Natural killer cell (primary cell): ENCODE measurements at regions of chr2 and their contacts with region 1.

Region 1: DNA sequence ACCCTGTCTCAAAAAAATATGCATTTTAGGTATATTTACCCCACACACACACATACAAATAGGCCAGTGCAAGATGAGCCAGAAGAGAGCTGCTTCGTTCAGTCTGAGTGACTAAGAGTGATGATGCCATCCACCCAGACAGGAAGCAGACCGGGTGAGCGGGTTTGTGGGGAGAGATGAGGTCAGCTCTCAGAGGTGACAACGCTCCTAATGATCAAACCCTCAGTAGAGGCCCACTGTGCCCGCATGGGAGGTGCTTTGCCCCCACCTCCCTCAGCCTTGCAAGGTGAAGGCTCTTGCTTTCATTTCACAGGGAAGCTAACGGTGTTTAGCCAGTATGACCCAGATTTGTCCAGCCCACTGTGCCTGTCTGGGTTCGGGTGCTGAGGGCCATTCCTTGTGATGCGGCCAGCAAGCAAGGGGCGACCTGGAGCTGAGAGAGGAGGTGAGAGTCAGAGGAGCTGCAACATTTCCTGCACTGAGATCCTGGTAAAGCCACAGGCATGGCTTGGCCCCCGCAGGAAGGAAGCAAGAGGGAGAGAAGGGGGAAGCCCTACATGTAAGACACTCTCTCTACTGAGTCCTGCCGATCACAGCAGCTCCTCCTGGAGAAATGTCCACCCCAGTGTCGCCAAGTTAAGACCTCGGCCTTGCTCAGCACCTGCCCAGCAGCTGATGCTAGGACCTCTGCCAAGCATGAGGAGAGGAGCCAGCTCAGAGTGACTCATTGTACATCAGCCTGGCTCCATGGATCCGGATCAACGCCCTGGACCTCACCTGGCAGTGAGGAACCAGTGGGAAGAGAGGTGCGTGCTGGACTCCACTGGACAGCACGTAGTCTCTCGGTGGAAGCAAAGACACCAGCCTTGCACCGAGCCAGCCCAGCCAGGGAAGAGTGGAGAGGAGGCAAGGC is 37.0 kb downstream of the NIFK start:
- DNase-seq: peak; percentile 86 to 92
- ATAC-seq: peak; percentile 86 to 95 (median 91)
- H3K4me3 ChIP-seq: peak overlapping the region; percentile 25
- H3K4me3 Mint-ChIP-seq: peak overlapping the region; percentile 95
- H3K27ac ChIP-seq: peak overlapping the region; percentile 88
- H3K27ac Mint-ChIP-seq: peak overlapping the region; percentile 97
- H3K4me1 ChIP-seq: peaks cover 29% of the 10 kb centered on the region
- H3K4me1 Mint-ChIP-seq: peaks cover 37 to 39% of the 10 kb centered on the region in 2 donors
- H3K27me3 ChIP-seq: no peaks in the 10 kb centered on the region
- H3K27me3 Mint-ChIP-seq: no peaks in the 10 kb centered on the region
- CTCF ChIP-seq: no peak

Region 2: DNA sequence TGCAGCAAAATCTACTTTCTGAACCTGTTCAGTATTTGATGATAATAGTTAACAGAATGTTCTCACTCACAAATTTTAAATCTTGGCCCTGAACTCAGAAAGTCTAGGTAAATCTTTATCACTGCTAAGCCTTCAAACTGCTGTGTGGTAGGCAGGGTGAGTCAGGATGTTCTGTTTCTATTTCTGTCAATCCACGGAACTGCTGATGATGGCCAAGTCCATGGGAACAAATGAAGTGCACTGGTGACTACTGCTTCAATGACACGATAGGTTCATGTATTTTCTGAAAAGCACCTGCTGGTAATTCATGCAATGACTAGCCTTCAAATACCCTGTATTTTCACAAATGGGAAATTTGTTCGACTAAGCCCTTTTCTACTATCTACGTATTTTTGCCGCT is 22.8 kb after region 1 on chr2:
- intact Hi-C with region 1: loop called (anchors 2 kb)
- DNase-seq: no peak
- ATAC-seq: no peak
- H3K4me3 ChIP-seq: no peak overlapping the region
- H3K4me3 Mint-ChIP-seq: no peak overlapping the region
- H3K27ac ChIP-seq: no peak overlapping the region
- H3K27ac Mint-ChIP-seq: no peak overlapping the region
- H3K4me1 ChIP-seq: peaks cover 8% of the 10 kb centered on the region
- H3K4me1 Mint-ChIP-seq: peaks cover 5% of the 10 kb centered on the region in 2 donors
- H3K27me3 ChIP-seq: no peaks in the 10 kb centered on the region
- H3K27me3 Mint-ChIP-seq: no peaks in the 10 kb centered on the region
- CTCF ChIP-seq: no peak

Region 3: GRCh38 chr2:121736462-121737341 is 37.0 kb after region 1 on chr2 and contains the start of gene NIFK:
- intact Hi-C with region 1: loop called (anchors 2 kb)
- DNase-seq: peak; percentile 98 to 99
- ATAC-seq: peak; percentile 89 to 97 (median 90)
- H3K4me3 ChIP-seq: peak within 1 kb of the TSS; percentile 85
- H3K4me3 Mint-ChIP-seq: peak within 1 kb of the TSS; percentile 99
- H3K27ac ChIP-seq: peak within 1 kb of the TSS; percentile 76
- H3K27ac Mint-ChIP-seq: peak within 1 kb of the TSS; percentile 96 to 98
- H3K4me1 ChIP-seq: peaks cover 23% of the 10 kb centered on the region
- H3K4me1 Mint-ChIP-seq: peaks cover 35 to 48% of the 10 kb centered on the region in 2 donors
- H3K27me3 ChIP-seq: no peaks in the 10 kb centered on the region
- H3K27me3 Mint-ChIP-seq: no peaks in the 10 kb centered on the region
- CTCF ChIP-seq: no peak
- total RNA-seq, gene NIFK: 32.7 to 37.7 (median 33.5) TPM

Region 4: GRCh38 chr2:121764681-121765228 is 65.1 kb after region 1 on chr2:
- intact Hi-C with region 1: no loop called
- DNase-seq: no peak
- ATAC-seq: no peak
- H3K4me3 ChIP-seq: no peak overlapping the region
- H3K4me3 Mint-ChIP-seq: no peak overlapping the region
- H3K27ac ChIP-seq: no peak overlapping the region
- H3K27ac Mint-ChIP-seq: no peak overlapping the region
- H3K4me1 ChIP-seq: no peaks in the 10 kb centered on the region
- H3K4me1 Mint-ChIP-seq: no peaks in the 10 kb centered on the region
- H3K27me3 ChIP-seq: no peaks in the 10 kb centered on the region
- H3K27me3 Mint-ChIP-seq: no peaks in the 10 kb centered on the region
- CTCF ChIP-seq: no peak